IMR-90 (cell line): ENCODE measurements at regions of chr9 and their contacts with region 1.

Region 1: GRCh38 chr9:129139993-129140396 is 28.8 kb downstream of the PTPA start:
- DNase-seq: peak; percentile 100
- ATAC-seq: peak; percentile 64
- H3K4me3 ChIP-seq: peak overlapping the region; percentile 28
- H3K27ac ChIP-seq: peak overlapping the region; percentile 98
- H3K4me1 ChIP-seq: peaks cover 49% of the 10 kb centered on the region
- H3K27me3 ChIP-seq: no peaks in the 10 kb centered on the region
- CTCF ChIP-seq: no peak
- POLR2A ChIP-seq: peak; percentile 86
- RAD21 ChIP-seq: peak; percentile 32

Region 2: DNA sequence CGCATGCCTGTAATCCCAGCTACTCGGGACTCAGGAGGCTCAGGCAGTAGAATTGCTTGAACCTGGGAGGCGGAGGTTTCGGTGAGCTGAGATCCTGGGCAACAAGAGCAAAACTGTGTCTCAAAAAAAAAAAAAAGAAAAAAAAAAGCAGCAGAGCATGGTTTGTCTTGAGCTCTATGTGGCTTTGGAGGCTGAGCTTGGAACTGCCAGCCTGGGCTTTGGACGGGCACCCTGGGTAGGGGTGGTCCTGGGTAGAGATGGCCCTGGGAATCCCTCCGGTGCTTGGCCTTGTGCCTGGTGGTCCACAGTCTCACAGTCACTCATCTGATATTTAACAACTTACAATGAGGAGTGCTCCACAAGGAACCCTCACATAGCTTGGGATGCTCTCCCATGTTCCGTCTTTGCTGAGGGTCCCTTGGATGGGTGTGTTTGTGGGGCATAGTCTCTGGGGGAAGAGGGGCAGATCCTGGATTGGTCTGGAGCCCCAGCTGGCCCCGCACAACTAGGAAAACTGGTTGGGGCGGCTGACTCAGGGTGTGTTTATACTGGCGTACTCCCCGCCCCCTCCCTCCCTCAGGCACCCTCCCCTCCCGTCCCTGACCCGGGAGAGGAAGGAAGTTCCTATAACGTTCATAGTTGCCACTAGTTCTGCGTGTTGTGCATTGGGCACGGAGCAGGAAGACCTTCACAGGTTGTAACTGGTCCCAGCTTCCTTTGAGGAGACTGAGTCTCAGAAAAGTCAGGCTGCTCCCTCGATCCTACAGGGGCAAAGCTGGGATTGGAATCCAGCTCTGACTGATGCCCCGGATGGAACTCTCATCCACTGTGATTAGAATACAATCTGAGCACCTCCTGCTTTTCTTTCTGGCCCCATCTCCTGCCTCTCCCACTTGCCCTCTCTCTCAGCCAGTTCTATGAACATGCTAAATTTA is 26.9 kb after region 1 on chr9:
- CTCF ChIA-PET with region 1: interaction called, 21 read pairs
- POLR2A ChIA-PET with region 1: interaction called, 4 read pairs
- dilution Hi-C with region 1: no loop called
- in situ Hi-C with region 1: no loop called
- intact Hi-C with region 1: loop called (anchors 2 kb)
- DNase-seq: peak; percentile 80
- ATAC-seq: peak; percentile 89
- H3K4me3 ChIP-seq: peak overlapping the region; percentile 20; the same call in 1 of the 2 replicates
- H3K27ac ChIP-seq: peak overlapping the region; percentile 91
- H3K4me1 ChIP-seq: peaks cover 32% of the 10 kb centered on the region
- H3K27me3 ChIP-seq: no peaks in the 10 kb centered on the region
- CTCF ChIP-seq: no peak
- POLR2A ChIP-seq: no peak; the same call in 1 of the 2 replicates
- RAD21 ChIP-seq: no peak

Region 3: GRCh38 chr9:129333953-129334724 is 194.1 kb after region 1 on chr9:
- CTCF ChIA-PET with region 1: no interaction called
- POLR2A ChIA-PET with region 1: no interaction called
- dilution Hi-C with region 1: no loop called
- in situ Hi-C with region 1: no loop called
- intact Hi-C with region 1: loop called (anchors 1 kb)
- DNase-seq: peak; percentile 92
- ATAC-seq: peak; percentile 92
- H3K4me3 ChIP-seq: no peak overlapping the region
- H3K27ac ChIP-seq: peak overlapping the region; percentile 91
- H3K4me1 ChIP-seq: peaks cover 38% of the 10 kb centered on the region
- H3K27me3 ChIP-seq: no peaks in the 10 kb centered on the region
- CTCF ChIP-seq: 0 out of 2 replicates have a peak, but pooled peaks have one; percentile 9
- POLR2A ChIP-seq: no peak
- RAD21 ChIP-seq: peak; percentile 27

Region 4: DNA sequence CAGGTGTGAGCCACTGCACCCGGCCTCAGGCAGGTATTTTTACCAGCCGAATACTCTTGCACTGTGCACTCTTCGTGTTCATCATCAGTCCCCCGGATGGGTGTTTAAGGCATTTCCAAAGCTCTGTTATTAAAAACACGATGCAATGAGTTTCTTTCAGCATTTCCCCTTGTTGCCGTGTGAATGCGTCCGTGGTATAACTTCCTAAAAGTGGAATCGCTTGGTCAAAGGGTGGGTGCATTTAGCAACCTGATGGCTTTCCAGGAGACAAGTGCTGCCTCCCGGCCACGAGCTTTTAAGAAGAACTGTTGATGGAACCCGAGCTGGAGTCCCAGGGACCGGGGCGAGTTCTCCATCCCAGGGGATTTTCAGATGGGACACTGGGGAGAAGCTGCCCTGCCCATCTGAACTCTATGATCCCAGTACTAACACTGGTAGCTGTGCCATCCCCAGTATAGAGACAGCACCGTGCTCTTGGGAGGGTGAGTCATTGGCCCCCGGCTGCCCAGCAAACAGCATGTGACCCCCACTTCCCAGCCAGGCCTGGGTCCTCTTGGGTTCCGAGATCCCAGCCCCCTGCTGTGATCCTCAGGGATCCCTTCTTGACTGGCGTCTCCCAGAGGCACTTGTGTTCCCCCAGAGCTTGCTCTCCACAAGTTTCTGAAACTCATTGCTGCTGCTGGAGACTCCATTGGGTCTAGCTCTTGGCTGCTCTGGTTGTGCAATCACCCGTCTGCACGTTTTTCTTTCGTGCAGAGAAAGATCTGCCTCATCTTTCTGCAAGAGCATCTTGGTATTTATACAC is 207.5 kb after region 1 on chr9:
- CTCF ChIA-PET with region 1: no interaction called
- POLR2A ChIA-PET with region 1: no interaction called
- dilution Hi-C with region 1: no loop called
- in situ Hi-C with region 1: no loop called
- intact Hi-C with region 1: no loop called
- DNase-seq: peak; percentile 36
- ATAC-seq: 0 out of 2 replicates have a peak, but pooled peaks have one; percentile 21
- H3K4me3 ChIP-seq: no peak overlapping the region
- H3K27ac ChIP-seq: no peak overlapping the region
- H3K4me1 ChIP-seq: peaks cover 12% of the 10 kb centered on the region; the same call in 1 of the 2 replicates
- H3K27me3 ChIP-seq: no peaks in the 10 kb centered on the region
- CTCF ChIP-seq: no peak
- POLR2A ChIP-seq: no peak
- RAD21 ChIP-seq: no peak

Region 5: DNA sequence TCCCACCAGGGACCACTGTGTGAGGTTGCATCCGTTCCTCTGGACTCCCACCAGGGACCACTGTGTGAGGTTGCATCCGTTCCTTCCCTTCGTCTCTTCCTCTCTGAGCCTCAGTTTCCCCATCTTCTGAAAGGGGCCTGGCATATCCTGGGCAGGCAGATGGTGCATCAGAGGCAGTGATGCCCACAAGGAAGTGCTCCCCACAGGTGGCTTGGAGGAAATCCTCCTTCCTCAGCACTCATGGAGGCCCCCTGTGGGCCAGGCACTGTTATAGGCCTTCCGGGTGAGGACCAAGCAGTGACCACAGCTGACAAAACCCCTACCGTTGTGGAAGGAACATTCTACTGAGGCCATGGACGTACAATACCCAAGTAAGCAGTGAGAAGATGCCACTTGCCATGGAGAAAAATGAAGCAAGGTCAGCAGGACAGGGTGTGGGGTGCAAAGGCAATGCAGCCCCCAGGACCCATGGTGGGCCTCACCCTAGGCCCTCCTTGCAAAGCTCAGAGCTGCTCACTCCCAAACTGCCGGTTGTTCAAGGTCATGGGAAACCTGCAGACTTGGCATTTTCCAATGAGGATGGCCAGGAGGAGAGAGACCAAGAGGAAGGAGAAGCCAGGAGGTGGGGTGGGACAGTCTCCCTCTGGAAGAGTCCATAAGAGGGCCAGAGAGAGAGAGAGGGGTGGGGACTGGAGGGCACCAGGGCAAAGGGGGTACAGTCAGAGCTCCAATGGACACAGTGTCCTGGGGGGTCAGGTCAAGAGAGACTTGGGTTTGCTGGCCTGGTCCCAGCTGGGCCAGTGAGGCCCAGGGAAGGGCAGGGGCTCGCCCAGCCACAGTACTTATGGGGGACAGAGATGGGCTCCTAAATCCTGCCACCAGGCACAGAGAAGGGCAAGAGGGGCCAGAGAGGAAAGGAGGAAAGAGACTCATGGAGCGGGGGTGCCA is 429.8 kb after region 1 on chr9:
- CTCF ChIA-PET with region 1: interaction called, 3 read pairs
- POLR2A ChIA-PET with region 1: no interaction called
- dilution Hi-C with region 1: no loop called
- in situ Hi-C with region 1: no loop called
- intact Hi-C with region 1: loop called (anchors 1 kb)
- DNase-seq: peak; percentile 36
- ATAC-seq: no peak
- H3K4me3 ChIP-seq: no peak overlapping the region
- H3K27ac ChIP-seq: peak overlapping the region; percentile 91
- H3K4me1 ChIP-seq: peaks cover 30% of the 10 kb centered on the region
- H3K27me3 ChIP-seq: no peaks in the 10 kb centered on the region
- CTCF ChIP-seq: peak; percentile 41
- POLR2A ChIP-seq: no peak
- RAD21 ChIP-seq: no peak; the same call in 1 of the 2 replicates

Region 6: DNA sequence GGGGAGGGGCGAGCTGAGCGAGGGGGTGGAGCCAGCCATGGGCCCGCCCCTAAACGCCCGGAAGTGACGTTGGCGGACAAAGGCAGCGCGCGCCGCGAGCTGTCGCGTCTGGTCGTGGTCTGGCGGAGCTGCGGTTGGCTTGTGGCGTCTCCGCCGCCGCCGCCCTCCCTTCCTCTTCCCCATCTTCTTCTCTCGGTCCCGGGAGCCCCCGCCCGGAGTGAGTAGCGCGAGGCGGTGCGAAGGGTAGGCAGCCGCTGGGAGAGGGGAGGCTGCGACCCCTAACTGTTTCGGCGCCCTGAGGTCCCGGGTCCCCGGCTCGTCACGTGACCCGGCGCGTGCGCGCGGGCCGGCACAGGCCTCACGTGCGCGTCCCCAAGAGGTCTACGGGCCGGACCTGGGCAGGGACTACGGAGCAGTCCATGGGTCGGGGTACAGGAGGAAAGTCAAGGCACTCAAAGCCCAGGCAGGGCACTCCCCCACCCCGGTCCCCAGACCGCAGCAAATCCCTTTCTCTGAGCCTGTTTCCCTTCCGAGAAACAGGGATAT is 486.2 kb after region 1 on chr9 and contains the start of gene NTMT1:
- CTCF ChIA-PET with region 1: interaction called, 8 read pairs
- POLR2A ChIA-PET with region 1: interaction called, 4 read pairs
- dilution Hi-C with region 1: no loop called
- in situ Hi-C with region 1: no loop called
- intact Hi-C with region 1: loop called (anchors 1 kb)
- DNase-seq: peak; percentile 81
- ATAC-seq: peak; percentile 72
- H3K4me3 ChIP-seq: peak within 1 kb of the TSS; percentile 96
- H3K27ac ChIP-seq: peak within 1 kb of the TSS; percentile 94
- H3K4me1 ChIP-seq: peaks cover 27% of the 10 kb centered on the region
- H3K27me3 ChIP-seq: no peaks in the 10 kb centered on the region
- CTCF ChIP-seq: no peak
- POLR2A ChIP-seq: peak; percentile 86
- RAD21 ChIP-seq: no peak
- total RNA-seq, gene NTMT1: 67.8 and 68.1 TPM in 2 replicates